Activated CD4-positive, alpha-beta T cell treated with anti-CD3 and anti-CD28 coated beads for 36 hours (primary cell): ENCODE measurements at regions of chr3 and their contacts with region 1.

Region 1: DNA sequence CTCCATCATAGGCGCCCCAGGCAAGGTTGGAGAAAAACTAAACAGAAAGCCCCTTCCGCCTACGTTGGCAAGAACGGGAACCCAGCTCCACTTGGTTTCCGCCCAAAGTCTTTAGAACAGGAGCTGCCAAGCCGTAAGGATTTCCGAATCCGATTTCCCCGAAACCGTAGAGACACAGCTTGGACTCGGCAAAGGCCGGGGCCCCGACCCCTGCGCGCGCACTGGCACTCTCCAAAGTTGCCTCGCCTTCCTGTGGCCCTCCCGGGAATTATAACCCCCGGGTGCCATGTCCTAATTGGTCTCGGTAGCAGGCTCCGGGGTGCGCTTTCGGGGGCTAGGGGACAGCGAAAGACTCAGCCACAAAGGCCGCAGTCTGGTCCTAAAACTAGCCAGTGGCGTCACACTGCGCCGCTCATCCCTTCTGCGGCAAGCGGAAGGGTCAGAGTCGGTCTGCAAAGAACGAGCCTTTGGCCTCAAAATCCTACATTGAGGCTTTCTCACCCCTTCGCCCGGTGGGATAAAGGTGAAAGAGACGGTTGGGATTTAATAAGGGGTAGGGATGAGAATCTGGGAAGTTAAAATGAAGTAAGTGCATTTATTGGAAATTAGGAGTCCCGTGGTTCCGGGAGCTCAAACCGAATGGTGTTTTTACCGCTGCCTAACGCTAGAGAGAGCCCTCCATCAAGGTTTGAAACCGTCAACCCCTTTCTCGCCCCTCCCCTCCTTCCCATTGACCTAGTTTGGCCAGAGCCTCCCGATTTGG is 6.8 kb downstream of the BCL6 start:
- DNase-seq: peak; percentile 82
- ATAC-seq: peak; percentile 25
- H3K4me3 Mint-ChIP-seq: peak overlapping the region; percentile 91
- H3K27ac Mint-ChIP-seq: peak overlapping the region; percentile 99
- H3K4me1 Mint-ChIP-seq: peaks cover 47% of the 10 kb centered on the region
- H3K27me3 Mint-ChIP-seq: no peaks in the 10 kb centered on the region

Region 2: DNA sequence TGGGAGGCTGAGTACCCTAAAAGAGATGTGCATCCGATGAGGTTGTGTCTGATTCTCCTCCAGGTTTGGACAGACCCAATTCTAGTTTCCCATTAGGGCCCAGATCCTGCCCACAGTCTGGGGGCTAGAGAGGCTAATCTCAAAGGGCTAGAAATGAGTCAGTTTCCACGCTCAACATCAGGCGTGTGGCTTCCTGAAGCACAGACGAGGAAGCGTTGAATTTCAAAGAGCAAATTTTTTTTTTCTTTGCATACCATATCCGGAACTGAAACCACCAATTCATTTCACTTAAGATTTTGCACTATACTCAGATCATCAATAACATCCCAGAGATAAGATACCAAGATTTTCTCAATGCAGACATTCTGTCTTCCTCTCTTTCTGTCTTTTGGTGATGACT is 180.5 kb after region 1 on chr3:
- CTCF ChIA-PET with region 1: interaction called, 17 read pairs
- POLR2A ChIA-PET with region 1: interaction called, 5 read pairs
- intact Hi-C with region 1: no loop called
- DNase-seq: peak; percentile 69
- ATAC-seq: peak; percentile 50
- H3K4me3 Mint-ChIP-seq: peak overlapping the region; percentile 59
- H3K27ac Mint-ChIP-seq: peak overlapping the region; percentile 86
- H3K4me1 Mint-ChIP-seq: peaks cover 70% of the 10 kb centered on the region
- H3K27me3 Mint-ChIP-seq: peaks cover 2% of the 10 kb centered on the region

Region 3: DNA sequence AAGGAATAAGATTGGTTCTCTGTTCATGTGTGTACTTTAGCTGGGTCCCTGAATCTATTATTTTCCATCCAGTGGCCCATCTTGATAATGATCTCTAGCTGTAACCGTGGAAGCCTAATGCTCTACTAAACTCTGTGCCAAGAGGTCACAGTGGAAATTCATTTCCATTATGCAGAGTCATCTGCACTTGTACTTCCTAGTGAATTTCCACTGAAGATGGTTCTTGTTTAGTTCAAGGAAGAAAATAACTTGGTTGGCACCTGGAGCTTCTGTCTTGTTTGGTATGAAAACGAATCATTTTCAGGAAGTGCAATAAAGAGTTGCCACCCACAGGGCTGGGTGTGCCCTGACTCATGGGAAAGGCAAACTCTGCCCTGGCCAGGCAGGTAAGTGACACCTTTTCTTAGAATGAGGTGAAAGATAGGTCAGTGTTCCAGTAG is 425.8 kb after region 1 on chr3:
- CTCF ChIA-PET with region 1: interaction called, 19 read pairs
- POLR2A ChIA-PET with region 1: interaction called, 4 read pairs
- intact Hi-C with region 1: loop called in 1 of 2 experiments (anchors 2 kb)
- DNase-seq: peak; percentile 52
- ATAC-seq: peak; percentile 24
- H3K4me3 Mint-ChIP-seq: no peak overlapping the region
- H3K27ac Mint-ChIP-seq: peak overlapping the region; percentile 74
- H3K4me1 Mint-ChIP-seq: peaks cover 58% of the 10 kb centered on the region
- H3K27me3 Mint-ChIP-seq: no peaks in the 10 kb centered on the region

Region 4: DNA sequence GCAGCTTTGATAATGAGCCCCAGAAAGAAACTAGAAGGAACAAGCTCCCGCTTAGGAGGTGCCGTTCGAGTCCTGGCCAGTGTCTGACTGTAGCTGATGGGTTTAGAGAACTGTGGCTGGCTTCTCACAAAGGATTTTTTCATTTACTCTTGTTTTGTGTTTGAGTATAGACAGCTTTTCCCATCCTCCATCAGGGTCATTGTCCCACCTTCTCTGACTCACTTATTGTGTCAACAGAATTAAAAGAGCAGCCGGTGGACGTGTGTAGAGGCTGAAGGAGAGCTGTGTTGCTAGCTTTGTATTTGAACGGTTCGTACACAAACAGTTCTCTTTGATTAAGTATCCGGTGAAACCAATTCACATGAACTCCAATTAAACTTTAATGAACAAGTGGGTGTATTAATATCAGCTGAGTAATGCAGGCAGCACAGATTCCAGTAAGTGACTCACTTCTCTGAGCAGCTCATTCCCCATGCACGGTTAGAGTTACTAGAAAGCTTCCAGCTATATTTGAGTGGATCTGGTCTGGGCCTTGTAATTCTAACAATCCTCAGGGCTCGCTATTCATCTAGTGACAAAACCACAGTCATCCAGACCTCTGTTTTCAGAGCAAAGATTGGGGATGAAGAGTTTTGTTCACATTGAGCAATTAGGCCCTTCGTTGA is 556.4 kb after region 1 on chr3:
- CTCF ChIA-PET with region 1: interaction called, 35 read pairs
- POLR2A ChIA-PET with region 1: interaction called, 8 read pairs
- intact Hi-C with region 1: loop called (anchors 1 to 5 kb)
- DNase-seq: peak; percentile 29
- ATAC-seq: peak; percentile 37
- H3K4me3 Mint-ChIP-seq: no peak overlapping the region
- H3K27ac Mint-ChIP-seq: peak overlapping the region; percentile 69
- H3K4me1 Mint-ChIP-seq: peaks cover 74% of the 10 kb centered on the region
- H3K27me3 Mint-ChIP-seq: no peaks in the 10 kb centered on the region

Region 5: GRCh38 chr3:188664795-188665194 is 926.3 kb after region 1 on chr3:
- CTCF ChIA-PET with region 1: no interaction called
- POLR2A ChIA-PET with region 1: no interaction called
- intact Hi-C with region 1: loop called in 1 of 2 experiments (anchors 5 kb)
- DNase-seq: peak; percentile 27
- ATAC-seq: peak; percentile 66
- H3K4me3 Mint-ChIP-seq: no peak overlapping the region
- H3K27ac Mint-ChIP-seq: no peak overlapping the region
- H3K4me1 Mint-ChIP-seq: peaks cover 10% of the 10 kb centered on the region
- H3K27me3 Mint-ChIP-seq: no peaks in the 10 kb centered on the region

Region 6: DNA sequence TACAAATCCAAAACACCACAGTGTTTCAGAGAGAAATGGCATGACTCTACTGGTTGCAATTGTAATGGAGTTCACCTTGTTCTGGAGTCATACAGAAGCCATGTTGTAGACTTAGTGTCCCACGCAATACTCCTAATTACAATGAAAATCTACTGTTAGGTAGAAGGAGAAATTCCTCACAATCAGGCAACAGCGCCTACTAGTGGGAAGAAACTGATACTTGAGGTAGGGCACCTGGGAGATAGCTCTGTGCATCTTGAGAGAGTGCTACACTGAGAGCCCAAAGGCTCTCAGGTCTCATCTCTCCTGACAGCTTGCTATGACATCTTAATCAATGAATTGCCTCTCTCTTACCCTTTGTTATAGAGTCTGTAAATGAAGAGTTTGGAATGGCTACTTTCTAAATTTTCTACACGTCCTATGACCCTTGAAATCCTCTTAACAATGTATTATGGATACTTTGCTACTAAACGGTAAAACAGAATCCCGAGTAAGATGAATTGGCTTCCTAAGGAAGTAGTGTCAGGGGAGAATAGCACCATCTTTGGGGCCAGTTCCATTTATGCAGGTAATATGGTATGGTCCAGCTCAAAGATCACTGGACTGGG is 1010.6 kb after region 1 on chr3:
- CTCF ChIA-PET with region 1: interaction called, 13 read pairs
- POLR2A ChIA-PET with region 1: no interaction called
- intact Hi-C with region 1: loop called in 1 of 2 experiments (anchors 1 kb)
- DNase-seq: peak; percentile 59
- ATAC-seq: no peak
- H3K4me3 Mint-ChIP-seq: no peak overlapping the region
- H3K27ac Mint-ChIP-seq: no peak overlapping the region
- H3K4me1 Mint-ChIP-seq: peaks cover 30% of the 10 kb centered on the region
- H3K27me3 Mint-ChIP-seq: no peaks in the 10 kb centered on the region

Region 7: GRCh38 chr3:189041482-189042090 is 1303.1 kb after region 1 on chr3:
- CTCF ChIA-PET with region 1: interaction called, 32 read pairs
- POLR2A ChIA-PET with region 1: interaction called, 6 read pairs
- intact Hi-C with region 1: loop called (anchors 1 kb)
- DNase-seq: peak; percentile 87
- ATAC-seq: peak; percentile 93
- H3K4me3 Mint-ChIP-seq: no peak overlapping the region
- H3K27ac Mint-ChIP-seq: no peak overlapping the region
- H3K4me1 Mint-ChIP-seq: peaks cover 36% of the 10 kb centered on the region
- H3K27me3 Mint-ChIP-seq: peaks cover 6% of the 10 kb centered on the region